Mammary epithelial cell (primary cell): ENCODE measurements at regions of chr7 and their contacts with region 1.

Region 1: GRCh38 chr7:54985405-54986330 is 33.1 kb upstream of the EGFR start:
- DNase-seq: peak; percentile 93
- H3K4me3 ChIP-seq: peak overlapping the region in 2 of 3 experiments; percentile 1 to 25
- H3K27ac ChIP-seq: peak overlapping the region; percentile 96
- H3K4me1 ChIP-seq: peaks cover 31% of the 10 kb centered on the region
- H3K27me3 ChIP-seq: no peaks in the 10 kb centered on the region
- CTCF ChIP-seq: no peak

Region 2: DNA sequence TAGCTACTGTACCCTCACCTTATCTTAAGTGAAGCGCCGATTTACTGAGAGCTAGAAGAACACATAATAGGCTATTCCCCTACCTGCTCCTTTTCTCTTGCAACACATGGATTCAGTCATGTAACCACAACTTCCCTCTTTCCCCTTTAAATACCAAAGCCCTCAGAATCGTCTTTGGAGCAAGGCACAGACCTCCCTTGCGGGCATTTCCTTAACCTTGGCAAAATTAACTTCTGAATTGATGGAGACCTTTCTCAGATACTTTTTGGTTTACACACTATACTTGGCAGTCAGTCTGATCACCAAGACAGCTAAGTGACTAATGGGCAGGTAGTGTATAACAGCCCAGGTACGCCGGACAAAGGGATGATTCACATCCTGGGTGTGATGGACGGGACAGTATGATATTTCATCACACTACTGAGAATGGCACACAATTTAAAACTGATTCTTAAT is 154.0 kb before region 1 on chr7:
- CTCF ChIA-PET with region 1: no interaction called
- dilution Hi-C with region 1: no loop called
- in situ Hi-C with region 1: no loop called
- intact Hi-C with region 1: loop called (anchors 1 kb)
- DNase-seq: peak; percentile 99
- H3K4me3 ChIP-seq: peak overlapping the region in 2 of 3 experiments; percentile 23 to 32
- H3K27ac ChIP-seq: peak overlapping the region; percentile 94
- H3K4me1 ChIP-seq: peaks cover 28% of the 10 kb centered on the region
- H3K27me3 ChIP-seq: no peaks in the 10 kb centered on the region
- CTCF ChIP-seq: no peak